ENCODE measurements at regions of chr13 and their contacts with region 1.

Region 1: DNA sequence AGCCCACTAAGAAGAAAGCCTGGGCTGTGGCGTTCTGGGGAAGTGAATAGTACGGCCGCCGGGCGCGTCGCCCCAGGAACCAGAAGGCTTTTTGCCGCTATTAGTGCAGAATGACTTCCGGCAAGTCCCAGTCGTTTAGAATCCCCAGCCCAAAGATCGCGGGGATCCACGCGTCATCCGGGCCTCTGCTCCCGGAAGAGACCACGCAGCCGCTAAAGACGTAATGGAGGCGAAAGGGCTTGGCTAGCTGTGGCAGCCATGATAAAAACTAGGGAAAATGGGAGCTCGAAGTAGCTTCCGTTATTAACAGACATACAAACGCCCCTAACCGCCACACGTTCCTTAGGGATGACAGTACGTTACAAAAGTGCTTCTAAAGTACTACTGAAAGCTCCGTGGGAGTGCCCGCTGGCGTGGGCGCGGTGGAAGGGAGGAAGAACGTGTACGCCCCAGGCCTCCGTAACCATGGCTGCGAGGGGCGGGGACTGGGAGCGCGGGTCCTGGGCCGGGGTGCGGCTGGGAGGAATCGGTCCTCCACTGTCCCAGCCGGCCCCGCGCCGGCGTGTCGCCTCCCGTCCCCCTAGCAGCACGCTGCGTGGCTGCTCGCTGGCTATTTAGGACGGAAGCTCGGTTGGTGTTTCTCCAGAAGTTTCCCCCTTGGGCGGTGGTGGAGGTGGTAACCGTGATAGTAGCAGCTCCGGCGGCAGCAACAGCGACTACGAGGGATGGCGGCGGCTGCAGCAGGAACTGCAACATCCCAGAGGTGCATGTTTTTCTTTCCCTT is at the start of gene SUGT1:
- DNase-seq: peak; percentile 91 to 98 (median 95)
- ATAC-seq: peak; percentile 93 to 94
- H3K4me3 Mint-ChIP-seq: no peak within 1 kb of the TSS
- H3K27ac Mint-ChIP-seq: no peak within 1 kb of the TSS
- H3K4me1 Mint-ChIP-seq: peaks cover 3 to 11% (median 6%) of the 10 kb centered on the region in 4 donors
- H3K27me3 Mint-ChIP-seq: no peaks in the 10 kb centered on the region
- polyA plus RNA-seq, gene SUGT1: 50.4 to 53.1 (median 51.3) TPM

Region 2: GRCh38 chr13:52617070-52618060 is 35.0 kb before region 1 on chr13:
- POLR2A ChIA-PET with region 1: interaction called, 114 read pairs
- DNase-seq: peak; percentile 61 to 89 (median 84)
- ATAC-seq: peak; percentile 95 to 96
- H3K4me3 Mint-ChIP-seq: peak overlapping the region; percentile 96 to 100 (median 99)
- H3K27ac Mint-ChIP-seq: peak overlapping the region; percentile 95 to 98 (median 97)
- H3K4me1 Mint-ChIP-seq: peaks cover 14 to 48% (median 39%) of the 10 kb centered on the region in 4 donors
- H3K27me3 Mint-ChIP-seq: no peaks in the 10 kb centered on the region

Region 3: DNA sequence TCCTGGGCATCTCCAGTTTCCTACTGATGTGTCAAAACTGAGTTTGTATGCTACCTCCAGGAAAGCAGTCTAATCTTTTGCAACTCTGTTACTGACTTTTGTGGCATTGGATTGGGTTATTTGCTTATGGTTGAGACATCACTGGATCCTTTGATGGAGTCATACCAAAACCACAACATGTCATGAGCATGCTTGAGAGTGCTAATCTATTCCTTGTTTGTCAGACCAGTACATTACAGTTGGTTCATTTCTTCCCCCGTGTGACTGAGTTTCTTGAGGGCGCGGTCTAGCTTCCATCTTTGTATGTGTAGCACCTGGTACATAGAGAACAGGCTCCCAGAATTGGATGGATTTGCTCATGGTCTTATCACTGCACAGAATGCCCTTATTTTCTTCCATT is 43.5 kb after region 1 on chr13:
- POLR2A ChIA-PET with region 1: no interaction called
- DNase-seq: no peak
- ATAC-seq: no peak
- H3K4me3 Mint-ChIP-seq: no peak overlapping the region
- H3K27ac Mint-ChIP-seq: no peak overlapping the region
- H3K4me1 Mint-ChIP-seq: peaks cover 4 to 21% (median 10%) of the 10 kb centered on the region in 4 donors
- H3K27me3 Mint-ChIP-seq: no peaks in the 10 kb centered on the region

Measured in naive thymus-derived CD8-positive, alpha-beta T cell (primary cell).